PC-3 (cell line): ENCODE measurements at regions of chr12 and their contacts with region 1.

Region 1: GRCh38 chr12:94532490-94533422 is 73.1 kb upstream of the CEP83 start:
- DNase-seq: peak; percentile 79
- ATAC-seq: peak; percentile 95
- H3K4me3 ChIP-seq: no peak overlapping the region
- H3K27ac ChIP-seq: no peak overlapping the region
- H3K4me1 ChIP-seq: no peaks in the 10 kb centered on the region
- H3K27me3 ChIP-seq: no peaks in the 10 kb centered on the region
- CTCF ChIP-seq: peak; percentile 93

Region 2: GRCh38 chr12:94133964-94134795 is 398.6 kb before region 1 on chr12:
- CTCF ChIA-PET with region 1: no interaction called
- POLR2A ChIA-PET with region 1: no interaction called
- intact Hi-C with region 1: loop called (anchors 1 kb)
- DNase-seq: peak; percentile 79
- ATAC-seq: peak; percentile 65
- H3K4me3 ChIP-seq: peak overlapping the region; percentile 26; the same call in 1 of the 2 replicates
- H3K27ac ChIP-seq: no peak overlapping the region
- H3K4me1 ChIP-seq: no peaks in the 10 kb centered on the region
- H3K27me3 ChIP-seq: peaks cover 4% of the 10 kb centered on the region
- CTCF ChIP-seq: peak; percentile 82

Region 3: DNA sequence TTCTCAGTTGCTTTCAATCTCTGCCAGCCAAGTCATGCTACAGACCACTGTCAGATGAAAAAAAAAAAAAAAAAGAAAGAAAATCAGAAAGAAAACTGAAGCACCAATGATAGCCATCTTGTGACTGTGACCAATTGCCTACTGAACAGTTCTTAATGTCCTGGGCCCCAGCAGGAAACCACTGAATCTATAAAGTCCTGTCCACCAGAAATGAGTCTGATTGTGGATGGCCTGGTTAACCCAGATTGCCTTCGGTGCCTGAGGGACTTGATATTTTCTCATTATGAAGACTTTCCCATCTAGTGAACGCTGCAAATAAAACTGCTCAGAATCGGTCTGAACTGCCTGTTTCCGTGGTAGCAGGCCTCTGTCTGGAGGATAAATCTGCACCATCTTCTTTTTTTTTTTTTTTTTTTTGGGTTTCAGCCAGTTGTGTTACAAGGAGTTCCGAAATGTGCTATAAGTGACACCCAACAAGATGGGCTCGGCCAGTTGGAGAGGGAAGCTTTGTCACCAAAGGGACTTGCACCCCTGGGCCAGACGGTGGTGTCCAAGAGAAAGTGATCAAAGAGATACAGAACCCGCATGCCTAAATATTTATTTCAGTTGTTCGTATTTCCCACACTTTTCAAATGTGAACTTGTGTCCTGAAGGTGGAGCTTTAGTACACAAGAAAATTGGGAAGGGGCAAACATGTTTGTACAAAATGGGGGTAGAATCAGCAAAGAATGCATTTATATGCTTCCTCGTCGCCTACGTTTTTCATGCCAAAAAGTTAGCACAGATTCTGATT is 387.4 kb before region 1 on chr12:
- CTCF ChIA-PET with region 1: no interaction called
- POLR2A ChIA-PET with region 1: no interaction called
- intact Hi-C with region 1: loop called (anchors 2 kb)
- DNase-seq: peak; percentile 61
- ATAC-seq: peak; percentile 42
- H3K4me3 ChIP-seq: no peak overlapping the region
- H3K27ac ChIP-seq: no peak overlapping the region
- H3K4me1 ChIP-seq: no peaks in the 10 kb centered on the region
- H3K27me3 ChIP-seq: peaks cover 66% of the 10 kb centered on the region
- CTCF ChIP-seq: peak; percentile 69

Region 4: DNA sequence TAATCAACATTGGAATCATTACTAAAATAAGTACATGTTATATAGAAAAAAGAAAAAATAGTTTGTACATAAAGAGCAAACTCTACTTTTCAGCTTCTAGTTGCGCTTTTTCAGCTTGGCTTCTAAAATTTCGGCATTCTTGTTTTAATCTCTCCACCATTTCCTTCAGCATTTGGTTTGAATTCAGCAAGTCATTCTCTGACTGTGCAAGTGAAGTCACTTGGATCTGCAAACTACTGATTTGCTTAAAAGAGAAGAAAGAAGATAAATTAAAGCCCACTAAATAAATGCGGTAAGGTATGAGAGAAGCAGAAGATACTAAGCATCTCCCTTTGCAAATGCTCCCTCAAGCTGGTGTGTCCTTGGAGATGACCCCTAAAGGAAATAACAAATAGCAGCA is 199.4 kb before region 1 on chr12:
- CTCF ChIA-PET with region 1: no interaction called
- POLR2A ChIA-PET with region 1: interaction called, 13 read pairs
- intact Hi-C with region 1: no loop called
- DNase-seq: no peak
- ATAC-seq: no peak
- H3K4me3 ChIP-seq: no peak overlapping the region
- H3K27ac ChIP-seq: no peak overlapping the region
- H3K4me1 ChIP-seq: no peaks in the 10 kb centered on the region
- H3K27me3 ChIP-seq: no peaks in the 10 kb centered on the region
- CTCF ChIP-seq: no peak

Region 5: GRCh38 chr12:94435511-94435927 is 97.2 kb before region 1 on chr12:
- CTCF ChIA-PET with region 1: no interaction called
- POLR2A ChIA-PET with region 1: no interaction called
- intact Hi-C with region 1: loop called (anchors 1 kb)
- DNase-seq: no peak
- ATAC-seq: no peak
- H3K4me3 ChIP-seq: no peak overlapping the region
- H3K27ac ChIP-seq: no peak overlapping the region
- H3K4me1 ChIP-seq: no peaks in the 10 kb centered on the region
- H3K27me3 ChIP-seq: no peaks in the 10 kb centered on the region
- CTCF ChIP-seq: no peak

Region 6: GRCh38 chr12:94571556-94571955 is 38.8 kb after region 1 on chr12:
- CTCF ChIA-PET with region 1: no interaction called
- POLR2A ChIA-PET with region 1: no interaction called
- intact Hi-C with region 1: no loop called
- DNase-seq: peak; percentile 96
- ATAC-seq: peak; percentile 59
- H3K4me3 ChIP-seq: no peak overlapping the region
- H3K27ac ChIP-seq: peak overlapping the region; percentile 25
- H3K4me1 ChIP-seq: peaks cover 32% of the 10 kb centered on the region
- H3K27me3 ChIP-seq: no peaks in the 10 kb centered on the region
- CTCF ChIP-seq: no peak